Heart left ventricle (tissue), 16 donors: ENCODE measurements at regions of chr5 and their contacts with region 1.

Region 1: DNA sequence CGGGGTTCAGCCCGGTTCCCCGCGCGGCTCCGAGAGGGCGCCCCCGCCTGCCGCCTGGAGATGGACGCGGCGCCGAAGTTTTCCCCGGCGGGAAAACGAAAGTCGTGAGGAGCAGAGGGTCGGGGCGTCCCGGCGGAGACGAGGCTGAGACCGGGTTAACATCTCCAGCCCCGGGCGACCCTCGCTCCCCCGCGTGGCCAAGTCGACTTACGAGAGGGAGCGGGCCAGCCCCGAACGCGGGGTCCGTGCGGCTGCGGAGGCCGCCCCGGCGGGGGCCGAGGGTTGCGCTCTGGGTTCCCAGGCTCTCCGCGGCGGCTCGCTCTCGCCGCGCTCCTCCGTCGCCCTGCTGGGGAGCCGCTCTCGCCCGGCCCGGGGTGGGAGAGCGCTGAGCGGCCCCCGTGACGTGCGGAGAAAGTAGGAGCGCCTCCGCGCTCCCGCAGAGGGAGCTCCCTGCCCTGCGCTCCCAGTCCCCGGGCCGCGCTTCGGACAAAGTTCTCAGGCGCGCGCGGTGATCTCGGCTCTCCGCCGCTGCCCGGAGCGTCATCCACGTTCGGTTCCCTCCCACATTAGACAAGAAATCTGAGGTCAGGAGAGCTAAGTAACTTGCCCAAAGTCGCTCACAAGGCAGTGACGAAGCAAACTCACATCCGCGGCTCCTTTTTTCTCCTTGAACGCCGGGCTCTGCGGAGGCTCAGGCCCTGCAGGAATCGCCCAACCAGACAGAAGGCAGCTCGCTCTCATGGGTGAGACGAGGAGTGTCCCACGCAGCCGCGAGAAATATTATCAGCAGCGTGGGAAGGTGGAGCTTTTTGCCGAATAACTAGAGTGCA is 1.2 kb upstream of the GCNT4 start:
- DNase-seq: peak; percentile 40 to 75 (median 51)
- ATAC-seq: peak; percentile 29 to 78 (median 72)
- H3K4me3 ChIP-seq: peak overlapping the region; percentile 62 to 96 (median 86)
- H3K27ac ChIP-seq: peak overlapping the region; percentile 75 to 89 (median 84)
- H3K4me1 ChIP-seq: peaks cover 0 to 30% (median 14%) of the 10 kb centered on the region in 12 donors
- H3K27me3 ChIP-seq: peaks cover 0 to 21% (median 0%) of the 10 kb centered on the region in 9 donors
- CTCF ChIP-seq: peak in 3 of 12 donors; percentile 10 to 25 (median 19)
- POLR2A ChIP-seq: no peak

Region 2: GRCh38 chr5:74502479-74502950 is 551.0 kb before region 1 on chr5:
- intact Hi-C with region 1: no loop called
- DNase-seq: peak in 1 of 5 donors; percentile 24
- ATAC-seq: peak in 2 of 4 donors; percentile 53 to 88
- H3K4me3 ChIP-seq: no peak overlapping the region
- H3K27ac ChIP-seq: peak overlapping the region in 3 of 12 donors; percentile 13 to 45 (median 41)
- H3K4me1 ChIP-seq: peaks cover 0 to 23% (median 3%) of the 10 kb centered on the region in 12 donors
- H3K27me3 ChIP-seq: no peaks in the 10 kb centered on the region
- CTCF ChIP-seq: no peak
- POLR2A ChIP-seq: no peak

Region 3: DNA sequence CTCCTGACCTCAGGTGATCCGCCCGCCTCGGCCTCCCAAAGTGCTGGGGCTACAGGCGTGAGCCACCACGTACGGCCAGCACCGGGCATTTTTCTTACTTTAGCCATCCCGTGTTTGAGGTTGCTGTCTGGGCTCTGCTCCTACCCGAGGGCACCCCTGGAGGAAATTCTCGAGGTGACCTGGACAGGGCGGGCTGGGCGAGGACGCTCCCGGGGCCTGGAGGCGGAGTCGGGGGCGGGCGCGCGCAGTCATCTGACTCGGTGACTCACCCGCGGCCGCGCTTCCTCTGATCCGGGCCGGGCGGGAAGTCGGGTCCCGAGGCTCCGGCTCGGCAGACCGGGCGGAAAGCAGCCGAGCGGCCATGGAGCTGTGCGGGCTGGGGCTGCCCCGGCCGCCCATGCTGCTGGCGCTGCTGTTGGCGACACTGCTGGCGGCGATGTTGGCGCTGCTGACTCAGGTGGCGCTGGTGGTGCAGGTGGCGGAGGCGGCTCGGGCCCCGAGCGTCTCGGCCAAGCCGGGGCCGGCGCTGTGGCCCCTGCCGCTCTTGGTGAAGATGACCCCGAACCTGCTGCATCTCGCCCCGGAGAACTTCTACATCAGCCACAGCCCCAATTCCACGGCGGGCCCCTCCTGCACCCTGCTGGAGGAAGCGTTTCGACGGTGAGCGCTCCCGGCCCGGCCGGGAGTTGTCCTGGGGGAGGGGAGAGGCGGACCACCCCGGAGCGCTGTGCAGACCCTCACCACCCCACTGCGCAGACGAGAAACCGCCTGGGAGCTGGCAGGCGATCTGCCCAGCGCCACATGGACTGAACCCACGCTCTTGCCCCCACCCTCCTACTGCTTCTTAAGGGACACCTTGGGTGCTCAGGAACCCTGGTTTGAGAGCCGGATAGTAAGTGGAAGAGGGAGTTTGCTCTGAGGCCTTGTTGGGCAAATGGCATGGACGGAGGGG is 368.3 kb before region 1 on chr5 and contains the start of gene HEXB:
- intact Hi-C with region 1: loop called in 1 of 10 experiments (anchors 10 kb)
- DNase-seq: peak; percentile 92 to 96 (median 93)
- ATAC-seq: peak; percentile 97 to 99 (median 98)
- H3K4me3 ChIP-seq: peak within 1 kb of the TSS; percentile 79 to 99 (median 93)
- H3K27ac ChIP-seq: peak within 1 kb of the TSS; percentile 55 to 96 (median 90)
- H3K4me1 ChIP-seq: peaks cover 0 to 29% (median 18%) of the 10 kb centered on the region in 12 donors
- H3K27me3 ChIP-seq: no peaks in the 10 kb centered on the region
- CTCF ChIP-seq: no peak
- POLR2A ChIP-seq: peak in 1 of 2 donors; percentile 94
- total RNA-seq, gene HEXB: 71.3 to 278 (median 116) TPM

Region 4: GRCh38 chr5:74798977-74799911 is 254.3 kb before region 1 on chr5:
- intact Hi-C with region 1: loop called in 1 of 10 experiments (anchors 10 kb)
- DNase-seq: no peak
- ATAC-seq: no peak
- H3K4me3 ChIP-seq: no peak overlapping the region
- H3K27ac ChIP-seq: no peak overlapping the region
- H3K4me1 ChIP-seq: no peaks in the 10 kb centered on the region
- H3K27me3 ChIP-seq: no peaks in the 10 kb centered on the region
- CTCF ChIP-seq: no peak
- POLR2A ChIP-seq: no peak

Region 5: DNA sequence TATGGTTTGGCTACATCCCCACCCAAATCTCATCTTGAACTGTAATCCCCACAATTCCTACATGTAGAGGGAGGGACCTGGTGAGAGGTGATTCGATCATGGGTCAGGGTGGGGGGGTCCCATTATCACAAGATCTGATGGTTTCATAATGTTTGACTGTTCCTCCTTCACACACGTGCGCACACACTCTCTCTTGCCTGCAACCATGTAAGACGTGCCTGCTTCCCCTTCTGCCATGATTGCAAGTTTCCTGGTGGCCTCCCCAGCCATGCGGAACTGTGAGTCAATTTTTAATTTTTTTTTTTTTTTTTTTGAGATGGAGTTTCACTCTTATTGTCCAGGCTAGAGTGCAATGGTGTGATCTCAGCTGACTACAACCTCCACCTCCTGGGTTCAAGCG is 214.3 kb before region 1 on chr5:
- intact Hi-C with region 1: no loop called
- DNase-seq: no peak
- ATAC-seq: no peak
- H3K4me3 ChIP-seq: no peak overlapping the region
- H3K27ac ChIP-seq: no peak overlapping the region
- H3K4me1 ChIP-seq: no peaks in the 10 kb centered on the region
- H3K27me3 ChIP-seq: no peaks in the 10 kb centered on the region
- CTCF ChIP-seq: no peak
- POLR2A ChIP-seq: no peak

Region 6: GRCh38 chr5:74919487-74919886 is 134.0 kb before region 1 on chr5:
- intact Hi-C with region 1: no loop called
- DNase-seq: no peak
- ATAC-seq: peak in 1 of 4 donors; percentile 55
- H3K4me3 ChIP-seq: no peak overlapping the region
- H3K27ac ChIP-seq: no peak overlapping the region
- H3K4me1 ChIP-seq: no peaks in the 10 kb centered on the region
- H3K27me3 ChIP-seq: peaks cover 0 to 3% (median 0%) of the 10 kb centered on the region in 9 donors
- CTCF ChIP-seq: peak; percentile 23 to 60 (median 48)
- POLR2A ChIP-seq: no peak

Region 7: GRCh38 chr5:75023368-75024159 is 30.0 kb before region 1 on chr5:
- intact Hi-C with region 1: no loop called
- DNase-seq: no peak
- ATAC-seq: no peak
- H3K4me3 ChIP-seq: no peak overlapping the region
- H3K27ac ChIP-seq: no peak overlapping the region
- H3K4me1 ChIP-seq: no peaks in the 10 kb centered on the region
- H3K27me3 ChIP-seq: no peaks in the 10 kb centered on the region
- CTCF ChIP-seq: no peak
- POLR2A ChIP-seq: no peak

Region 8: DNA sequence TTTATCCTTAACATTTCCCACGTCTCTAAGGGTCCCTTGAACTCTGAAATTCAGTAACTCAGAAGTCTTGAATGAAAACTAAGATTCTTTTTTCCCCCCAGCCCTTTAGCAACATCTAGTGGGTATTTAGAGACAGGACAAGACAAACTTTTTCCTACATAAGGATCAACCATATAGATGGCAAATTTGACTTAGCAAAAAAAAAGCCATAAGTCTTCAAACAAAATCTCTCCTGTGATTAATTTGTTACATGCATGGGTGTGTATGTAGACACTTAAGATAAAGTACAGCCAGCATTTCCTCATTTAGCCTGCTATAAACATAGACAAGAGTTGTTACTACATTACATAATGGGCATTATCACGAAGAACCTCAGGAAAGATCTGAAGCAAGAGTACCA is 212.2 kb after region 1 on chr5:
- intact Hi-C with region 1: loop called in 1 of 10 experiments (anchors 10 kb)
- DNase-seq: no peak
- ATAC-seq: no peak
- H3K4me3 ChIP-seq: no peak overlapping the region
- H3K27ac ChIP-seq: no peak overlapping the region
- H3K4me1 ChIP-seq: no peaks in the 10 kb centered on the region
- H3K27me3 ChIP-seq: no peaks in the 10 kb centered on the region
- CTCF ChIP-seq: peak in 10 of 12 donors; percentile 18 to 42 (median 34)
- POLR2A ChIP-seq: no peak

Region 9: GRCh38 chr5:75336625-75337339 is 283.3 kb after region 1 on chr5 and contains the start of gene HMGCR:
- intact Hi-C with region 1: loop called in 3 of 10 experiments (anchors 5 to 10 kb)
- DNase-seq: peak; percentile 99 to 100 (median 99)
- ATAC-seq: peak; percentile 99 to 100 (median 100)
- H3K4me3 ChIP-seq: peak within 1 kb of the TSS; percentile 75 to 99 (median 89)
- H3K27ac ChIP-seq: peak within 1 kb of the TSS; percentile 54 to 98 (median 88)
- H3K4me1 ChIP-seq: peaks cover 0 to 28% (median 14%) of the 10 kb centered on the region in 12 donors
- H3K27me3 ChIP-seq: no peaks in the 10 kb centered on the region
- CTCF ChIP-seq: peak in 5 of 12 donors; percentile 19 to 55 (median 35)
- POLR2A ChIP-seq: peak in 1 of 2 donors; percentile 69
- total RNA-seq, gene HMGCR: 6.0 to 15.2 (median 11.9) TPM

Region 10: GRCh38 chr5:76256116-76256889 is 1202.8 kb after region 1 on chr5:
- intact Hi-C with region 1: loop called in 1 of 10 experiments (anchors 5 kb)
- DNase-seq: peak in 4 of 5 donors; percentile 48 to 57 (median 51)
- ATAC-seq: peak; percentile 78 to 95 (median 94)
- H3K4me3 ChIP-seq: no peak overlapping the region
- H3K27ac ChIP-seq: no peak overlapping the region
- H3K4me1 ChIP-seq: peaks cover 0 to 7% (median 3%) of the 10 kb centered on the region in 12 donors
- H3K27me3 ChIP-seq: peaks cover 0 to 19% (median 3%) of the 10 kb centered on the region in 9 donors
- CTCF ChIP-seq: peak; percentile 44 to 70 (median 60)
- POLR2A ChIP-seq: no peak